Activated B cell treated with CpG ODN at 0.5 μM for 24 hours (primary cell): ENCODE measurements at regions of chr3 and their contacts with region 1.

Region 1: DNA sequence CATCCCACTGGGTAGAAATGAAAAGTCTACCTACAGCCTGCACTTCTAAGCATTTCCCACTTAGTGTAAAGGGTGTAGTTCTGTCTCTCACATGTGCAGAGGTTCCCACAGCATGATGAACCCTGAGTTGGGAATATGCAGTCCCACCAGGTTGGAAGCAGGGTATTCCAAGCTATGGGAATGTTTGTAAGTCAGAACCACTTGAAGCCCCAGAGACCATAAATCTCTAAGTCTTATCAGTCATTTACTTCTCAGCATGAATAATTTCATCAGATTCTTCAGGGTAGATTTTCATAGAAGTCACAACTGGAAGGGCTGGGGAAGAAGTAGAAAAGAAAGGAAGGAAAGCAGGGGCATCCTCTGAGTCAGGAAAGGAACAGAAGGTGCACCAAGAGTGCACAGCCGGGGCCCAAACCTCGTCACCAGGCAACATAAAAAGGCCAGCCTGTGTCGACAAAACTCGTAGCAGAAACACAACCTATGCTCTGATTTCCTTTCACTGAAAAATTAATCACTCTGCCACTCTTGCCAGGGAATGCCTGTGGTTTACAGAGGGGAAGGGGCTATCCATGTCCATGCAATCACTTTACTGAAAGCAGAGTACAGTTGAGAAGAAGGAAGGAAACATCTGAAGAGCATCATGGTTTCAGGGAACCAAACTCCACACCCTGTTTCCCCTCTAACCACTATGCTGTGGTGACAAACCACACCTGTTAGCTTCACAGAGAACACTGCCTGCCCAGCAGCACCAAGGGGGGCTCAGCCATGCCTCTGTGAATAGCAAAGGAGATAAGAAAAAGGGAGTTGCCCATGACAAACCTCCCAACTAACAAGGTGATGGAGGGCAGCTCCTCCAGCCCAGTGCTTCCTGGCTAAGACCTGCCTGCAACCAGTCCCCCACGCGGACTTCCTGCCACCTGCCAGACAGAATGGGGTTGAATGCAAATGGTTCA is 40.5 kb downstream of the SH3BP5 start:
- DNase-seq: peak; percentile 46
- ATAC-seq: peak; percentile 78
- H3K4me3 Mint-ChIP-seq: peak overlapping the region; percentile 66
- H3K27ac Mint-ChIP-seq: peak overlapping the region; percentile 91
- H3K4me1 Mint-ChIP-seq: peaks cover 97% of the 10 kb centered on the region
- H3K27me3 Mint-ChIP-seq: no peaks in the 10 kb centered on the region
- CTCF ChIP-seq: no peak

Region 2: DNA sequence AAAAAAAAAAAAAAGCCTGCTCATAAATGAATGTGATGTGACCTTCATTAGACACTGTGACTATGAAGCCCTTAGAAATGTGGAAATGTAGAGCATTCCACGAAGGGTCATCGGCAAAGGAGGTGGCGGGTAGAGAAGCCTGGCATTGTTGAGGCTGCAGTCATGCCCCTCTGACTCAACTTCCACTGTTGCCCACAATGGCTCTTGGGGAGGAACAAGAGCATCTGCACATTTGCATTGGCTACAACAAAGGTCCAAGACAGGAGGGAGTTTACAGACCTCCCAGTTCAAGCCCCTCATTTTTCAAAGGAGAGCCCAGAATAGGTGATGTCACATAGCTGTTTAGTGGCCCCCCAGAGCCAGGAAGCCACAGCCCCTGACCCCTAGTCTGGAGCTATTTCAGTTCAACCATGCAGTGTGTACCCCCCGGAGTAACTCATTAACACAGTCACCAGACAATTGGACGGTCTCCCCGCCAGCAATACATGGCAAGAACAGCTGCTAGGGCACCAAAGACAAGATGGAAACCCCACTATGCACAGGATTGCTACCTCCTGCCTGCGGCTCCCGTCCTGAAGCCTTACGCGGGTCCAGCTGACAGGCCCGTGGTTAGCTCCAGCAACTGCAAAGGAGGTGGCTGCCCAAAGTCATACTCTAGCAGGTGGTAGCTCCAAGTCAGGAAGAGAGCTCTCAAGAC is 15.7 kb before region 1 on chr3:
- CTCF ChIA-PET with region 1: interaction called, 7 read pairs
- POLR2A ChIA-PET with region 1: interaction called, 20 read pairs
- intact Hi-C with region 1: loop called (anchors 1 kb)
- DNase-seq: no peak
- ATAC-seq: no peak
- H3K4me3 Mint-ChIP-seq: no peak overlapping the region
- H3K27ac Mint-ChIP-seq: peak overlapping the region; percentile 73
- H3K4me1 Mint-ChIP-seq: peaks cover 96% of the 10 kb centered on the region
- H3K27me3 Mint-ChIP-seq: no peaks in the 10 kb centered on the region
- CTCF ChIP-seq: no peak

Region 3: GRCh38 chr3:15309662-15310335 is 17.9 kb after region 1 on chr3:
- CTCF ChIA-PET with region 1: interaction called, 4 read pairs
- POLR2A ChIA-PET with region 1: interaction called, 25 read pairs
- intact Hi-C with region 1: loop called (anchors 1 kb)
- DNase-seq: no peak
- ATAC-seq: no peak
- H3K4me3 Mint-ChIP-seq: peak overlapping the region; percentile 35
- H3K27ac Mint-ChIP-seq: peak overlapping the region; percentile 83
- H3K4me1 Mint-ChIP-seq: peaks cover 86% of the 10 kb centered on the region
- H3K27me3 Mint-ChIP-seq: no peaks in the 10 kb centered on the region
- CTCF ChIP-seq: no peak

Region 4: DNA sequence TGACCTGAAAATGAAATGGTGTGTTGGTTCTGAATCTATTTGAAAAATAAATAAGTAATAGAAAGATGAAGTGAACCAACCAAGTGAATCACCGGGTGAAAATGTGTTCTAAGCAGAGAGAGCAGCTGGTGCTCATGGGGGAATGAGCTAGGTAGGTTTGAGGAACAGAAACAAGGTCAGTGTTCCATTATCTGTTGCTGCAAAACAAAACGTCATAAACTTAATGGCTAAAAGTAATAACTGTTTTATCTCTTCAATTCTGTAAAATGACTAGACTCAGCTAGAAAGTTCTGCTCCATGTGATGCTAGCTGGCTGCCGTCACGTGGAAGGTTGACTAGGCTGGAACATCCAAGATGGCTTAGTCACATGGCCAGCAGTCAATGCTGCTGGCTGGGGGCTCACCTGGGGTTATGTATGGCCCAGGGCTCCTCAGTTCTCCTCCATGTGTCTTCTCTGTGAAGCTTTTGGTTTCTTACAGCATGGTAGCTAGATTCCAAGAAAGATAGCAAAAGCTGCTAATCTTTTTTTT is 53.8 kb after region 1 on chr3:
- CTCF ChIA-PET with region 1: no interaction called
- POLR2A ChIA-PET with region 1: interaction called, 13 read pairs
- intact Hi-C with region 1: loop called (anchors 1 kb)
- DNase-seq: peak; percentile 53
- ATAC-seq: peak; percentile 90
- H3K4me3 Mint-ChIP-seq: peak overlapping the region; percentile 59
- H3K27ac Mint-ChIP-seq: peak overlapping the region; percentile 98
- H3K4me1 Mint-ChIP-seq: peaks cover 84% of the 10 kb centered on the region
- H3K27me3 Mint-ChIP-seq: no peaks in the 10 kb centered on the region
- CTCF ChIP-seq: no peak

Region 5: GRCh38 chr3:15361494-15362212 is 69.8 kb after region 1 on chr3:
- CTCF ChIA-PET with region 1: no interaction called
- POLR2A ChIA-PET with region 1: interaction called, 6 read pairs
- intact Hi-C with region 1: loop called (anchors 1 kb)
- DNase-seq: peak; percentile 44
- ATAC-seq: peak; percentile 70
- H3K4me3 Mint-ChIP-seq: peak overlapping the region; percentile 64
- H3K27ac Mint-ChIP-seq: peak overlapping the region; percentile 74
- H3K4me1 Mint-ChIP-seq: peaks cover 65% of the 10 kb centered on the region
- H3K27me3 Mint-ChIP-seq: no peaks in the 10 kb centered on the region
- CTCF ChIP-seq: no peak

Region 6: DNA sequence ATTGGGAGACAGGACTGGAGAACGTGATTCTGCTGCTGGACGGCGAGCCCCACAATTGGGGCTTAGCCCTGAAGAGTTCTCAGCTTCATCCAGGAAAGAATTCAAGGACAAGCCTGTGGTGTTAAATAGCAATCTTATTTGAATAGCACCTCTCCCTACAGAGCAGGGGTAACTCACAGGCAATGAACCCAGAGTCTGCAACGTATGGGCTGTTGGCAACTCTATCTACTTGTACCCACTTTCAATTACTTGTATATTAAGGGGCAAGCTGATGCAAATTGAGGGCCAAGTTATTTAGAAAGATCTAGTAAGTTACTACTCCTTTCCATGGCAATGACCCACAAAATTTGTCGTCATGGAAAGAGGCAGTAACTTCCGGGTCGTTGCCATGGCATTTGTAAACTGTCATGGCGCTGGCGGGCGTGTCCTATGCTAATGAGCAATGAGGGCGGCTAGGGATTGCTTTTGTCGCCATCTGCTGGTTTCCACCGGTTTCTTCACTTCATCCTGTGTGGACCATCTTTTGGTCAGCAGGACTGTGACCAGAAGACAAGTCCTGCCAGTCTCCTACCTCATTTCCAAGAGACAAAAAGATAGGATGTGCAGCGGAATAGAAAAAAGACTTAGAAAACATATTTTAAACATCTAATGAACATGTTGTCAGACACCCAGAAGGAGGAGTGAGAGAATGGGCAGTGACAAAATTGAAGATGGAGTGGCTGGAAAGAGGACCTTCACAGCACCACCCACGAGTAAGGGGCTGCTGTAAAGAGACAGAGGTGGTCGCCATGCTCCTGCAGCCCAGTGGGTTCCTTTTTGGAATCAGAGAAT is 86.3 kb after region 1 on chr3:
- CTCF ChIA-PET with region 1: interaction called, 4 read pairs
- POLR2A ChIA-PET with region 1: interaction called, 10 read pairs
- intact Hi-C with region 1: loop called (anchors 1 kb)
- DNase-seq: peak; percentile 88
- ATAC-seq: peak; percentile 94
- H3K4me3 Mint-ChIP-seq: peak overlapping the region; percentile 44
- H3K27ac Mint-ChIP-seq: peak overlapping the region; percentile 91
- H3K4me1 Mint-ChIP-seq: peaks cover 29% of the 10 kb centered on the region
- H3K27me3 Mint-ChIP-seq: no peaks in the 10 kb centered on the region
- CTCF ChIP-seq: no peak

Region 7: GRCh38 chr3:15384510-15385237 is 92.8 kb after region 1 on chr3:
- CTCF ChIA-PET with region 1: interaction called, 3 read pairs
- POLR2A ChIA-PET with region 1: interaction called, 10 read pairs
- intact Hi-C with region 1: no loop called
- DNase-seq: no peak
- ATAC-seq: peak; percentile 90
- H3K4me3 Mint-ChIP-seq: peak overlapping the region; percentile 71
- H3K27ac Mint-ChIP-seq: peak overlapping the region; percentile 95
- H3K4me1 Mint-ChIP-seq: peaks cover 79% of the 10 kb centered on the region
- H3K27me3 Mint-ChIP-seq: no peaks in the 10 kb centered on the region
- CTCF ChIP-seq: no peak